Activated naive CD4-positive, alpha-beta T cell treated with anti-CD3 and anti-CD28 coated beads for 36 hours (primary cell): ENCODE measurements at regions of chr2 and their contacts with region 1.

Region 1: GRCh38 chr2:9423100-9423921 is at the starts of genes CPSF3 and ITGB1BP1:
- DNase-seq: peak; percentile 97
- H3K4me3 Mint-ChIP-seq: no peak within 1 kb of the TSS
- H3K27ac Mint-ChIP-seq: peak within 1 kb of the TSS; percentile 92
- H3K4me1 Mint-ChIP-seq: peaks cover 39% of the 10 kb centered on the region
- H3K27me3 Mint-ChIP-seq: no peaks in the 10 kb centered on the region
- total RNA-seq, gene CPSF3: 64.5 to 65.7 TPM
- total RNA-seq, gene ITGB1BP1: 97.2 to 97.4 TPM

Region 2: GRCh38 chr2:8621072-8621382 is 802.3 kb before region 1 on chr2:
- CTCF ChIA-PET with region 1: no interaction called
- intact Hi-C with region 1: no loop called
- DNase-seq: no peak
- H3K4me3 Mint-ChIP-seq: no peak overlapping the region
- H3K27ac Mint-ChIP-seq: no peak overlapping the region
- H3K4me1 Mint-ChIP-seq: no peaks in the 10 kb centered on the region
- H3K27me3 Mint-ChIP-seq: no peaks in the 10 kb centered on the region

Region 3: DNA sequence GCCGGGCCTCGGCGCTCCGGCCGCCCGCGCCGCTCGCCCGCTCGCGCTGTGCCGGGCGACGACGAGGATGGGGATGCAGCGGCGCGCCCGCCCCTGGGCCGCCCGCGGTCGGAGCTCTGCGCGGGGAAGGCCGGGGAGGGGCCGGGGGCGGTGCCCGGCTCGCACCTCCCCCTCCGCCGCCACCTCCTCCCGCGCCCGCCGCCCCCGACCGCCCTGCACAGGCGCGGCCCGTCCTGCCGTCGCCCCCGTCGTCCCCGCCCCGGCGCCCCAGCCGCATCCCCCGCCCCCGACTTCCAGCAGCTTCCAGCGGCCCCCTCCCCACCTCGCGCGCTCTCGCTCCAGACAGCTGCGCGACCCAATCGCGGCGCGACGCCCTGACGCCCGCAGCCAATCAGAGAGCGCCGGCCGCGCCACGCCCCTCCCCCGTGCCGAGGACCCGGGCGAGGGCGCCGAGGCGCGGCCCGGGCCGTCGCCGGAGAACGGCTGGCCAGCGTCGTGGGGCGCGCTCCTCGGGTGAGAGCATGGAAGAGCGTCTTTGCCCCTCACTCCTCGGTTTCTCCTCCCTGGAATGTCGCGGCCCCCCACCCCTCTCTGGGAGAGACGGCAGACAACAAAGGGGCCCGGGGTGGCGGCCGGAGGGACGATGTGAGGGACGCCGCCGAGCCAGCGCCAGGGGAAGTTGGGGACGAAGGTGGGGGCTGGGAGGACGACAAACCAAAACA is 419.5 kb before region 1 on chr2 and contains the start of gene MBOAT2:
- CTCF ChIA-PET with region 1: no interaction called
- intact Hi-C with region 1: loop called (anchors 5 kb)
- DNase-seq: peak; percentile 87
- H3K4me3 Mint-ChIP-seq: peak within 1 kb of the TSS; percentile 73
- H3K27ac Mint-ChIP-seq: no peak within 1 kb of the TSS
- H3K4me1 Mint-ChIP-seq: peaks cover 15% of the 10 kb centered on the region
- H3K27me3 Mint-ChIP-seq: peaks cover 5% of the 10 kb centered on the region
- total RNA-seq, gene MBOAT2: 4.1 to 4.4 TPM

Region 4: GRCh38 chr2:9205963-9206948 is 217.1 kb before region 1 on chr2 and contains the start of gene ASAP2:
- CTCF ChIA-PET with region 1: no interaction called
- intact Hi-C with region 1: loop called (anchors 1 kb)
- DNase-seq: peak; percentile 44
- H3K4me3 Mint-ChIP-seq: peak within 1 kb of the TSS; percentile 65
- H3K27ac Mint-ChIP-seq: no peak within 1 kb of the TSS
- H3K4me1 Mint-ChIP-seq: peaks cover 5% of the 10 kb centered on the region
- H3K27me3 Mint-ChIP-seq: peaks cover 45% of the 10 kb centered on the region
- total RNA-seq, gene ASAP2: 0.14 to 0.15 TPM

Region 5: DNA sequence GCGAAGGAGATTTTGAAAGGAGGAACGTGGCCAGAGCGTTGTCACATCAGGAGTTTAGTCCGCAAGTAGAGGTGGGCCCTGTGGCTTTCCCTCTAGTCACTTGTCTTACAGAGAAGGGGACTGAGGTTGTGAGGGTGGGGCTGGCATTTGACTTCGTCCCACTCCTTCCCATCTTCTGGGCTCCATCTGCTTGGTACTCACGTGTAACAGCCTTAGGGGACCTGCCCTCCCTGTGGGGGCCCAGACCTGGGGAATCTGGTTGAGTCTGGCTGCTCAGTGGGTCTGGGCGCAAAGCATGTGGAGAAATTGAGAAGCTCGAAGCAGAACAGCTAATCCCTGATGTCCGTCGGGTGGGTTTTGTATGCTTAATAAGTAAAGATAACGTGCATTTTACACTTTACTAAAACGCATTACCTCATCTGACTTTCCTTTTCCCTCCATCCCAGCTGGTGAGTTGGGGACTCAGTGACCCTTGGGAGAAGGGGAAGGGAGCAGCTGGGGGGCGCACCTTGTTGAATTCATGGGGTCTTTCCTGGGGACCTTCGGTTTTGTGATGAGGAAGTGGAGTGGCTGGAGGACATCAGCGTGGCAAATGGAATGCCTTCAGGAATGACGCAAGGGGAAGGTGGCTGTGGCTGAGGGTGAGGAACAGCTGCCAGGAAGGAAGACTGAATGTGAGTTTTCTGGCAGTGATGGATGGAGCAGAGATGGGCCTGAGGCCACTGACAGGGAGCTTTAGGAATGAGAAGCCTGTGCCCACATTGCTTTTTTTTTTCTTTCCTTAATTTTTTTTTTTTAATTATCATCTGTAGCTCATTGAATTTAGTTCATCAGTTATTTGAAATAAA is 171.9 kb before region 1 on chr2:
- CTCF ChIA-PET with region 1: no interaction called
- intact Hi-C with region 1: no loop called
- DNase-seq: no peak
- H3K4me3 Mint-ChIP-seq: no peak overlapping the region
- H3K27ac Mint-ChIP-seq: no peak overlapping the region
- H3K4me1 Mint-ChIP-seq: no peaks in the 10 kb centered on the region
- H3K27me3 Mint-ChIP-seq: peaks cover 4% of the 10 kb centered on the region

Region 6: DNA sequence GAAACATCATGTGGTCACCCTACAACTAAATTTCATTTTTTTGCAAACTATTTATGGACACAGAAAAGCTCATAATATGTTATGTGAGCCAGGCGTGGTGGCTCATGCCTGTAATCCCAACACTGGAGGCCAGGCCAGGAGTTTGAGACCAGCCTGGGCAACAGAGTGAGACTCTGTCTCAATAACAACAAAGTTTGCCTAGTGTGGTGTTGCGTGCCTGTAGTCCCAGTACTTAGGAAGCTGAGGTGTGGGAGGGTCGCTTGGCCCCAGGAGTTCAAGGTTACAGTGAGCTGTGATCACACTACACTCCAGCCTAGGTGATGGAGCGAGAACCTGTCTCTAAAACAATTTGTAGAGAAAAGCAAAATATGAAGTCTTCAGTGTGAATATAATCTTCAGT is 56.8 kb after region 1 on chr2:
- CTCF ChIA-PET with region 1: no interaction called
- intact Hi-C with region 1: no loop called
- DNase-seq: no peak
- H3K4me3 Mint-ChIP-seq: no peak overlapping the region
- H3K27ac Mint-ChIP-seq: no peak overlapping the region
- H3K4me1 Mint-ChIP-seq: peaks cover 32% of the 10 kb centered on the region
- H3K27me3 Mint-ChIP-seq: no peaks in the 10 kb centered on the region

Region 7: GRCh38 chr2:9778012-9778411 is 354.7 kb after region 1 on chr2:
- CTCF ChIA-PET with region 1: no interaction called
- intact Hi-C with region 1: loop called (anchors 1 kb)
- DNase-seq: peak; percentile 42
- H3K4me3 Mint-ChIP-seq: no peak overlapping the region
- H3K27ac Mint-ChIP-seq: no peak overlapping the region
- H3K4me1 Mint-ChIP-seq: peaks cover 40% of the 10 kb centered on the region
- H3K27me3 Mint-ChIP-seq: no peaks in the 10 kb centered on the region